ENCODE measurements at regions of chr5 and their contacts with region 1.

Region 1: GRCh38 chr5:142713121-142713706 is 27.3 kb upstream of the FGF1 start:
- DNase-seq: peak; percentile 80
- ATAC-seq: peak; percentile 92
- H3K4me3 ChIP-seq: peak overlapping the region; percentile 79
- H3K27ac ChIP-seq: peak overlapping the region; percentile 43
- H3K4me1 ChIP-seq: 0 out of 2 replicates have a peak, but pooled peaks cover 2% of the 10 kb centered on the region
- H3K27me3 ChIP-seq: peaks cover 1% of the 10 kb centered on the region; the same call in 1 of the 2 replicates
- CTCF ChIP-seq: peak; percentile 76
- POLR2A ChIP-seq: no peak
- RAD21 ChIP-seq: peak; percentile 55

Region 2: GRCh38 chr5:142472300-142472951 is 240.8 kb before region 1 on chr5:
- CTCF ChIA-PET with region 1: no interaction called
- POLR2A ChIA-PET with region 1: no interaction called
- dilution Hi-C with region 1: no loop called
- in situ Hi-C with region 1: no loop called
- intact Hi-C with region 1: no loop called
- DNase-seq: peak; percentile 96
- ATAC-seq: peak; percentile 90
- H3K4me3 ChIP-seq: no peak overlapping the region
- H3K27ac ChIP-seq: peak overlapping the region; percentile 62; the same call in 1 of the 2 replicates
- H3K4me1 ChIP-seq: peaks cover 5% of the 10 kb centered on the region
- H3K27me3 ChIP-seq: no peaks in the 10 kb centered on the region
- CTCF ChIP-seq: no peak
- POLR2A ChIP-seq: no peak
- RAD21 ChIP-seq: no peak

Region 3: GRCh38 chr5:142529626-142530278 is 183.5 kb before region 1 on chr5:
- CTCF ChIA-PET with region 1: no interaction called
- POLR2A ChIA-PET with region 1: no interaction called
- dilution Hi-C with region 1: no loop called
- in situ Hi-C with region 1: no loop called
- intact Hi-C with region 1: no loop called
- DNase-seq: peak; percentile 82
- ATAC-seq: peak; percentile 72
- H3K4me3 ChIP-seq: no peak overlapping the region
- H3K27ac ChIP-seq: no peak overlapping the region; the same call in 1 of the 2 replicates
- H3K4me1 ChIP-seq: peaks cover 4% of the 10 kb centered on the region
- H3K27me3 ChIP-seq: no peaks in the 10 kb centered on the region
- CTCF ChIP-seq: no peak
- POLR2A ChIP-seq: no peak
- RAD21 ChIP-seq: no peak

Region 4: DNA sequence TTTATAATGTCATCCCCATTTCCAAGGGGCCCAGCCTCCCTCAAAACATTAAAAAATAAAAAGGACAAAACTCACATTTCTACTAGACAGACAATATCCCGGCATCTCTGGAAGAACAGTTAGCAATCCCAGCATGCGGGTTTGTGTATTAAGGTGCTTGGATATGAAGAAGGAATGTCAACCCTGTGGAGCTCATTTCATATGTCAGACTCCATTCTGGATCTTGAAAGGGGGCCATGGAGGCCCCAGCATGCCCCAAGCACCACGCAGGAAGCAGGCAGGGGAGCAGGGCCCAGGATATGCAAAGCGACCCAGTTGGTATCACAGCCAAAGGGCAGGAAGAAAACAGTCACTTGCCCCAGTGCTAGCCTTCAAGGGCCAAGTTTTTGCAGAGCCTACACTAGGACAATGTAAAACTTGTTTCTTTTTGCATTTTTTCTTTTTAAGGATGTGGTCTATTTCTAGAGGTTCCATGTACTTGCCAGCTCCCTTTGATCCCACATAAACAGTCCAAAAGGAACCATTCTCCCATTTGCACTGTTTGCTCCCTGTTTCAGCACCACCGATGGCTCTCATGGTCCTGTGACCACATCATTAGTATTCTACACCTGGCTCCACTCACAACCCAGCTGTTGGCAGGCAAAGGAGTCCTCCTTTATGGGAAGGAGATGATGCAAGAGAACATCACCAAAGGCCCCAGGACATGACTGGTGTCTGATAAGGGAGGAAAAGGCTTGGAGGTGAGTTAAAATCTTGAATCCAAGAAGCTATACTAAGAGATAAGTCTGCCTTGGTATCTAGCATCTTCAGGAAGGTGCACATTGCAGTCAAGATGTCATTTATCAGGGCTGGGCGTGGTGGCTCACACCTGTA is 85.6 kb before region 1 on chr5:
- CTCF ChIA-PET with region 1: no interaction called
- POLR2A ChIA-PET with region 1: no interaction called
- dilution Hi-C with region 1: no loop called
- in situ Hi-C with region 1: no loop called
- intact Hi-C with region 1: no loop called
- DNase-seq: peak; percentile 35
- ATAC-seq: no peak
- H3K4me3 ChIP-seq: no peak overlapping the region
- H3K27ac ChIP-seq: no peak overlapping the region
- H3K4me1 ChIP-seq: peaks cover 14% of the 10 kb centered on the region
- H3K27me3 ChIP-seq: no peaks in the 10 kb centered on the region
- CTCF ChIP-seq: no peak
- POLR2A ChIP-seq: no peak
- RAD21 ChIP-seq: no peak

Region 5: GRCh38 chr5:142769741-142770631 is 56.8 kb after region 1 on chr5 and contains the start of gene ARHGAP26:
- CTCF ChIA-PET with region 1: interaction called, 6 read pairs
- POLR2A ChIA-PET with region 1: no interaction called
- dilution Hi-C with region 1: no loop called
- in situ Hi-C with region 1: no loop called
- intact Hi-C with region 1: loop called (anchors 5 kb)
- DNase-seq: peak; percentile 91
- ATAC-seq: peak; percentile 100
- H3K4me3 ChIP-seq: peak within 1 kb of the TSS; percentile 87
- H3K27ac ChIP-seq: no peak within 1 kb of the TSS; the same call in 1 of the 2 replicates
- H3K4me1 ChIP-seq: peaks cover 3% of the 10 kb centered on the region; the same call in 1 of the 2 replicates
- H3K27me3 ChIP-seq: peaks cover 34% of the 10 kb centered on the region
- CTCF ChIP-seq: peak; percentile 46
- POLR2A ChIP-seq: peak; percentile 69
- RAD21 ChIP-seq: peak; percentile 55
- total RNA-seq, gene ARHGAP26: 0.54 and 0.56 TPM in 2 replicates

Region 6: GRCh38 chr5:142881076-142881783 is 168.0 kb after region 1 on chr5:
- CTCF ChIA-PET with region 1: interaction called, 38 read pairs
- POLR2A ChIA-PET with region 1: no interaction called
- dilution Hi-C with region 1: loop called (anchors 25 kb)
- in situ Hi-C with region 1: no loop called
- intact Hi-C with region 1: loop called (anchors 1 kb)
- DNase-seq: peak; percentile 91
- ATAC-seq: peak; percentile 84
- H3K4me3 ChIP-seq: no peak overlapping the region
- H3K27ac ChIP-seq: no peak overlapping the region
- H3K4me1 ChIP-seq: peaks cover 5% of the 10 kb centered on the region
- H3K27me3 ChIP-seq: no peaks in the 10 kb centered on the region; the same call in 1 of the 2 replicates
- CTCF ChIP-seq: no peak
- POLR2A ChIP-seq: no peak
- RAD21 ChIP-seq: no peak

Region 7: DNA sequence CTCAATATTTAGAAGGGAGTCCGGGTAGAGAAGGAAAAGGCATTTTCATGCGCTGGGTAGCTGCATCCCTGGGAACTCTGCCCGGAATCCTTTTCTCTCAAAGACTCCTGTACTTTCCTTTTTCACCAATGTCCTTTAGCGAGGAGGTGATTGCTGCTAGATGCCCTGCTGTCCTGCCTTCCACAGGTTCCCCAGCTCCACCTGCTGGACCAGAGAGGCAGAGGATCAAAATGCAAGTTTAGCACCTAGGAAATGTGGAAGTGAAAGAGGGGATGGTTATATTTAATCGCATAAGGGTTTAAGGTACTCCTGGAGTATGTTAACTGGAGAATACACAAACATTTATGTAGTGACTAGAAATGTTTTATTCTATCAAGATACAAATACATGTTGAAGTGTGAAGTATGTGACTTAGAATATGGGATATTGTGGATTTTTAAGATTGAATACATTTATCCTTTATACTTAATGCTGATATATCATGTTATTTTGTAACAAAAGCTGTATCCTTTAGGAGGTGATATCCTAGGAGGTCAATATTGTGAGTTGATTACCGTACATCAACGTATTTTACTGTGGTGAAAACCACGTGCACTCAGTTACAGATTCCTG is 202.7 kb after region 1 on chr5:
- CTCF ChIA-PET with region 1: interaction called, 10 read pairs
- POLR2A ChIA-PET with region 1: no interaction called
- dilution Hi-C with region 1: no loop called
- in situ Hi-C with region 1: no loop called
- intact Hi-C with region 1: no loop called
- DNase-seq: peak; percentile 48
- ATAC-seq: no peak; the same call in 1 of the 2 replicates
- H3K4me3 ChIP-seq: no peak overlapping the region
- H3K27ac ChIP-seq: no peak overlapping the region
- H3K4me1 ChIP-seq: no peaks in the 10 kb centered on the region
- H3K27me3 ChIP-seq: no peaks in the 10 kb centered on the region
- CTCF ChIP-seq: peak; percentile 53
- POLR2A ChIP-seq: no peak
- RAD21 ChIP-seq: peak; percentile 57

Region 8: DNA sequence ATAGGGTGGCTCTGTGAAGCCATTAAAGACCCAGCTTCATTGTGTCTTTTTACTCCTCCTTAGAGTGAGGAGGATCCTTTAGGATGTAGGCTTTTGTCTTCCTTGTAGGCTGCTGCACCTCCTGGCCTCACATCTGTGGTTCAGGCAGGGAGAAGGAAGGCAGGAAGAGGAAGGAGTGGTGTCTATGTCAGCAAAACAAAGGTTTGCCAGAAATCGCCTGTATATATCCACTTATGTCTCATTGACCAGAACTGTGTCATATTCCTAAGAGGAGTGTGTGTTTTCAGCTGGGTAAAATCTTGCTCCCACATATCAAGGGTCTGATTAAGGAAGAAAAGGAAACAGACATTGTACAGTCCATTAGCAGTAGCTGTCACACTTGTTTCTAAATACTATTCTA is 270.8 kb after region 1 on chr5:
- CTCF ChIA-PET with region 1: no interaction called
- POLR2A ChIA-PET with region 1: no interaction called
- dilution Hi-C with region 1: no loop called
- in situ Hi-C with region 1: no loop called
- intact Hi-C with region 1: no loop called
- DNase-seq: peak; percentile 78
- ATAC-seq: no peak
- H3K4me3 ChIP-seq: no peak overlapping the region
- H3K27ac ChIP-seq: no peak overlapping the region
- H3K4me1 ChIP-seq: peaks cover 16% of the 10 kb centered on the region
- H3K27me3 ChIP-seq: no peaks in the 10 kb centered on the region
- CTCF ChIP-seq: no peak
- POLR2A ChIP-seq: no peak
- RAD21 ChIP-seq: no peak